Heart left ventricle (tissue), 16 donors: ENCODE measurements at regions of chr1 and their contacts with region 1.

Region 1: GRCh38 chr1:35930593-35931445 is at the start of gene AGO3:
- DNase-seq: peak; percentile 86 to 90 (median 88)
- ATAC-seq: peak; percentile 75 to 96 (median 92)
- H3K4me3 ChIP-seq: peak within 1 kb of the TSS; percentile 61 to 97 (median 92)
- H3K27ac ChIP-seq: peak within 1 kb of the TSS; percentile 94 to 100 (median 98)
- H3K4me1 ChIP-seq: peaks cover 0 to 41% (median 22%) of the 10 kb centered on the region in 12 donors
- H3K27me3 ChIP-seq: no peaks in the 10 kb centered on the region
- CTCF ChIP-seq: no peak
- POLR2A ChIP-seq: peak; percentile 4 to 90
- total RNA-seq, gene AGO3: 8.6 to 18.8 (median 14.7) TPM

Region 2: GRCh38 chr1:35882945-35883634 is 47.7 kb before region 1 on chr1 and contains the start of gene AGO1:
- intact Hi-C with region 1: loop called in 3 of 10 experiments (anchors 1 to 5 kb)
- DNase-seq: peak; percentile 95 to 98 (median 96)
- ATAC-seq: peak; percentile 92 to 98 (median 98)
- H3K4me3 ChIP-seq: peak within 1 kb of the TSS; percentile 56 to 100 (median 88)
- H3K27ac ChIP-seq: peak within 1 kb of the TSS in 11 of 12 donors; percentile 68 to 90 (median 82)
- H3K4me1 ChIP-seq: peaks cover 0 to 44% (median 20%) of the 10 kb centered on the region in 12 donors
- H3K27me3 ChIP-seq: no peaks in the 10 kb centered on the region
- CTCF ChIP-seq: peak; percentile 93 to 100 (median 98)
- POLR2A ChIP-seq: peak; percentile 53 to 92
- total RNA-seq, gene AGO1: 16.8 to 27.0 (median 20.7) TPM